ENCODE measurements at regions of chr22 and their contacts with region 1.

Region 1: GRCh38 chr22:46309526-46310085 is 12.9 kb downstream of the GTSE1 start:
- DNase-seq: no peak
- ATAC-seq: no peak

Region 2: GRCh38 chr22:45994491-45995404 is 314.9 kb before region 1 on chr22:
- intact Hi-C with region 1: loop called (anchors 10 kb)
- DNase-seq: peak; percentile 58 to 80
- ATAC-seq: peak; percentile 72

Region 3: DNA sequence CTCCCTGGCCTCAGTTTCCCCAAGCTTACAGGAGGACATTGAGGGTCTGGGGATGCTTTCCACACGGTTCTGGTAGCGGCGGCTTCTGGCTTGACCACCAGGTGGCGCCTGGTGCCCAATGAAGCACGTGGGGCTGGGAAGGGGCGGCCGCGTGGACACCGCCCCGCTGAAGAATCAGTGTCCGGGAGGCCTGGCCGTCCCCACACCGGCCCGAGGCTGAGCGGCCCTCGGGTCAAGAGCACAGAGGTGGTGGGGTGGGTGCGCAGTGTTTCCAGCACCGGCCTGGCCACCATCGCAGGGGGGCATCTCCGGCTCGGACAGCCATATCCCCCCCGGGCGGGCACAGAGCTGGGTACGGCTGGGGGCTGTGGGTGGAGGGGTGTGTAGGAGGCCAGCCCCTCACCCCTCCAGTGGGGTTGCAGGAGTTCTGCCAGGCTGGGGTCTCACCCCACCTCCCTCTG is 187.1 kb before region 1 on chr22:
- intact Hi-C with region 1: loop called (anchors 5 kb)
- DNase-seq: peak in 1 of 2 donors; percentile 82
- ATAC-seq: peak; percentile 29

Region 4: DNA sequence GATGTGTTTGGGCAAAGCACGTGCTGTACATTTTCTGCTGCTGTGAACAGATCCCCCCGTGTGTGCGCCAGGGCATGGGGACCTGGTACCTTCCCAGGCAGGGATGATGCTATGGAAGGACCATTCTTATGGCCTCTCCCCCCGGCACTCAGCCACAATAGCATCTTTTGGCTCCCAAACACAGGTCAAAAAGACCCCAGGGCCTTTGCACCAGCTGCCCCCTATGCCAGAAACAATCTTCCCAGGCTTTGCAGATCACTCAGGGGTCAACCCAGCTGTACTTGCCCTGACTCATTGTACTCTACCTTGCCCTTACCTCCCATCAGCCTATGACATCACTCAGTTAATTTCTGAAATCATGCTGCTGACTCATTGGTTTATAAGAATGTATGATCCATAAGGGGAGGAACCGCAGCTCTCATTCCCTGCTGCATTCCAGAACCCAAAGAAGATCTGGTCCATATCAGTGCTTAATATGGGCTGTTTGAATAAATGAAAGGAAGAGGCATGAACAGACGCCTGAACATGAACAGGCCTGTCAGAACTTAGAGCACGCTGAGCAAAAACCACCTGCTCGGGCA is 127.1 kb after region 1 on chr22:
- intact Hi-C with region 1: no loop called
- DNase-seq: no peak
- ATAC-seq: no peak

Measured in left colon (tissue), 2 donors.